PC-3 (cell line): ENCODE measurements at regions of chr3 and their contacts with region 1.

Region 1: GRCh38 chr3:157329551-157329950 is 107.1 kb upstream of the PTX3 start:
- DNase-seq: no peak
- ATAC-seq: no peak
- H3K4me3 ChIP-seq: no peak overlapping the region
- H3K27ac ChIP-seq: no peak overlapping the region
- H3K4me1 ChIP-seq: peaks cover 16% of the 10 kb centered on the region
- H3K27me3 ChIP-seq: no peaks in the 10 kb centered on the region
- CTCF ChIP-seq: no peak

Region 2: DNA sequence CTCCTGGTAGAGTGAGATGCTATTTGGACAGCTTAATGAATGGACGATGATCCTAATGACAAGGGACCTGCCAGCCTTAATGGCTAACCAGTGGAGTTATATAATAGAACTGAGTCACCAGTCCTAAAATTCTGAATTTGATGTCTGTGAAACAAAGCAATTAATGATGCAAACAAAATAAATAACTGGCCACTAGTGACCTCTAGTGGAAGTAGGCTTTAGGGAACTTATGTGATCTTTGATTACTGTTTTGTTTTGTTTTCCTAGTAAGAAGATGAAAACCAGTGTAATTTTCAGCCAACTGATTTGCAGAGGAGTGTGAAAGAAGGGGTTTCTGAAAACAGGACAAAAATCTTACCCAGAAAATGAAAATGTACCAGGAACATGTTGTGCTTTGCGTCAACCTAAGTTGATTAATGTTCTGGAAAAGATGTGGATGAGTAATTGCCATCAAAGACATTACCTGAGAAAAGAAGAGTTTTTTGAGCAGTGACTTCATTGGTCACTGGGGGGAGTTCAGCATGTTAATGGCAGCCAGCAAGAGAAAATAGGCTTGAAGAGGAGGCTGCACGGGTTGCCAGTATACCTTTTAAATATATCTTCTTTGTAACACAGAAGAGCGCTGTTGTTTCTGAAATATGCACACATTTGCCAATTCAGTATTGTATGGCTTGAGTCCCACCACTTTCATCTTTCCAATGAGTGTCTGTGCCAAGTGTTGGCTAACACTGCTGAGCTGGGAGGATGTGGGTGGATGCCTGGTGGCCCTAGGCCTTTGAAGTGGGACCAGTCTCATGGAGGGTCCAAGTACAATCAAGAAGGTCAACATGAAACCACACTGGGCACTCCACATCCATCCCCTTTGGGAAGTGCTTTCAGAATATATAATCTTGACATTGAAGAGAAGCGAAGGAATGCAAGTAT is 164.3 kb after region 1 on chr3:
- CTCF ChIA-PET with region 1: no interaction called
- POLR2A ChIA-PET with region 1: no interaction called
- intact Hi-C with region 1: loop called (anchors 2 kb)
- DNase-seq: peak; percentile 83
- ATAC-seq: peak; percentile 68
- H3K4me3 ChIP-seq: no peak overlapping the region
- H3K27ac ChIP-seq: no peak overlapping the region
- H3K4me1 ChIP-seq: peaks cover 11% of the 10 kb centered on the region
- H3K27me3 ChIP-seq: no peaks in the 10 kb centered on the region
- CTCF ChIP-seq: peak; percentile 92